ENCODE measurements at regions of chr1 and their contacts with region 1.

Region 1: DNA sequence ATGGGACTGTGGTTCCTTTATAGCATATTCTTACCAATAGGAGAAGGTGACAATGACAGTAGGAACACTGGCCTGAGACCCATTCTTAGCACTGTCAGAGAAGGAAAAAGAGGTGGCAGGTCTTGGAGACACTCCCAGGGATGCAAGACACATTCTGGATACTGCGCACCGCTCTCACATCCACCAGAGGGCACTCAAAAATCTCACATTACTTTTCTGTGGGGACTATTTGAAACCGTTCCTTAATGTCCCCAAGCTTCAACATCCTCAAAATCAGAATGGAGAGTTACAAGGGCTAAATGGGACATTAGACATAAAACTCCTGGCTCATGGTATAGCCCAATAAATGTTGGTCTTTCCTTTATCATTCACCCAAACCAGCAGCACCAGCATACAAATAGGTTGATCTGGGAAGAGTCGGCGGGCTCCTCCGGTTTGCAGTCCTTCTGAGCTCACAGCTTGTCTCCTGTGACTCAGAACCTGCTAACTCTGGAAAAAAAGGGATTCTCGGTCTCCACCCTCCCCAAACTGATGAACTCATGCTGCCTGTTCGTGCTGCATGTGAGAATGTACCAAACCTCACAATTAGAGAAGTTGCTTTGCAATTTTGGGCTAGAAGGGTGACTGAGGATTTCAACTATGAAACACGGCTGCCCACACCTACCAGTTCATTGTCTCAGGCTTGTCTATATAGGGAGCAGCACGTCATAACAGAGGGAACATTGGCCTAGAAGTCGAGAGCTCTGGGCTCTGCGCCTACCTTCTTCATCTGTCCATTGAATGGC is 40.2 kb downstream of the IL12RB2 start:
- DNase-seq: no peak
- H3K4me3 ChIP-seq: no peak overlapping the region
- H3K27ac ChIP-seq: no peak overlapping the region
- H3K27me3 ChIP-seq: no peaks in the 10 kb centered on the region
- CTCF ChIP-seq: peak; percentile 90

Region 2: DNA sequence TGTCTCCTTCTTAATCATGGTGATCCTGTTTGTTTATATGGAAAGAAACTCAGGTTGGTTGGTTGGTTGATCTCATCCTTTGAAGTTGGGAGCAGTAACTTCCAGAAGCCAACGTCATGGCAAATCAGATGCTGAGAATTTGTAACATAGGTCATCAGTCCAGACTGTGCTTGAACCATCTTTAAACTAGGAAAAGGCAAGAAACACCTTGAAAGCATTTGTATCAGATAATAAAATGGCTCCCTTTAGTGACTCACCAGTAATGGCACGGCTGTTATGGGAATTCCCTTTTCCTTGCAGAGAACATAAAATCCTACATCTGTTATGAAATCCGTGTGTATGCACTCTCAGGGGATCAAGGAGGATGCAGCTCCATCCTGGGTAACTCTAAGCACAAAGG is 24.3 kb after region 1 on chr1:
- CTCF ChIA-PET with region 1: interaction called, 10 read pairs
- POLR2A ChIA-PET with region 1: no interaction called
- DNase-seq: no peak
- H3K4me3 ChIP-seq: no peak overlapping the region
- H3K27ac ChIP-seq: no peak overlapping the region
- H3K27me3 ChIP-seq: no peaks in the 10 kb centered on the region
- CTCF ChIP-seq: no peak

Region 3: DNA sequence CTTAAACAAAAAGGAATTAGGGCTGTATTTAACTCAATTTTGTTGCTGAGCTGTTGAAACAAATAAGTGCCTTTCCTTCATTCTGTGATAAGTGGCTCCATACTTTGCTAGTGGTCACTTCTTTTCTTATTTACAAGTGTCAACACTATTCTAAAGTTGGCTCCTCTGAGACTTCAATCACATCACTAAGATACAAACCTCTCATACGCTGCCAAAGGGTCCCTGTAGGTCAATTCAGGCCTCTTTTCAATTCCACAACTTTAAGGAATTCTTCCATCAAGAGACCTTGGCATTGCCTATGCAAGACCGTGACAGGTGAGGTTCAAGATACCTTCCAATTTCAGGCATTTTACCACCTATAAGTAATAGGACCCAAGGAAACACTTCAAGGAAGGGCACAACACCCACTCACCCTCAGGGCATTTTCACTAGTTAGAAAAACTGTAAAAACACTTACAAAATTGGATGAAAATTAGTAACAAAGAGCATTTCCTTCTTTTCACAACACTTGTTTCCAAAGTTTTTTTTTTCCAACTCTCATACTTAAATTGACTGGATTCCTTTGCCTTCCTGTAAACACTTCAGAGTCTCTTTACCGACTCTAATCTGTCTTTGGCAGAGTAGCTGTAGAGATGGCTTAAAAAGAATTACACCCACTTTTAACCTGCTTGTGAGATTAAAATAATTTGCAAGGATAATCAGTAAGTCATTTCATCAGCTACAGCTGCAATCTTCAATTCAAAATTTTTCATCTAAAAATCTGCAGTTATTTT is 57.8 kb after region 1 on chr1:
- CTCF ChIA-PET with region 1: no interaction called
- POLR2A ChIA-PET with region 1: no interaction called
- DNase-seq: no peak
- H3K4me3 ChIP-seq: no peak overlapping the region
- H3K27ac ChIP-seq: no peak overlapping the region
- H3K27me3 ChIP-seq: no peaks in the 10 kb centered on the region
- CTCF ChIP-seq: no peak

Region 4: GRCh38 chr1:67418839-67419586 is 71.1 kb after region 1 on chr1:
- CTCF ChIA-PET with region 1: no interaction called
- POLR2A ChIA-PET with region 1: no interaction called
- DNase-seq: no peak
- H3K4me3 ChIP-seq: no peak overlapping the region
- H3K27ac ChIP-seq: no peak overlapping the region
- H3K27me3 ChIP-seq: no peaks in the 10 kb centered on the region
- CTCF ChIP-seq: no peak

Region 5: DNA sequence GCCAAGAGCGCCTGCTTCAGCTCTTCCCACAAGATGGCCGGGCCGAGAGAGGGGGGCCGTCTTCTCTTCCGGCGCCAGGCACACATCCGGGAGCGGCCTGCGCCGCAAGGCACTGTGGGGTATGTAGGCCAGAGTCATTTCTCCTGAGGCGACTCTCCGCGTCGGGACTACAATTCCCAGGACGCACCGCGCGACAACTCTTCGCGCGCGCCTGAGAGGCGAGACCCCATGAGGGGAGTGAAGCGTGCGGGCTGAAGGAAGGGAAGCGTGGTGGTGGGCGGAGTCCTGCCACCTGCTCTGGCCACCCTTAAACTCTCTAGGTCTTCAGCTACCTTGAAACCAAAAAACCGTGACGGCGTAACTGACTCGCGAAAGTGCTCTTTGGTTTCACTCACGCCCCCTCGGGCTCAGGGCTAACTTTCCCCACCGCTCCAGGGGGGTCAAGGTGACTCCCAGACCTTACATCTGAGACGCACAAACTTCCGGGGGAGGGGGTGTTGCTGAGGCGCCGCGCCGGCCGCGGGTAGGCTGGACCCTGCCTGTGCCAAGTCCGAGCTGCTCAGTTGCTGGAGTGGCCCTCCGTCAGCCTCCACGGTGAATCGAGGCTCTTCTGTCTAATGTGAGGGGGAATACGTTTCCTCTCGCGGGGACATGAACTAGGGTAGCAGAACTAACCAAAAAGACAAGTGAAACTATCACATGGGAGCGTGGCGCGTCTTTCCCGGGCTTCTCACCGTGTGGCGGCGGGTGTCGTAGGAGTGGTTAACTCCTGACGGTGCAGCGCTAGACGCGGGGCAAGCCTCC is 82.7 kb after region 1 on chr1 and contains the start of gene SERBP1:
- CTCF ChIA-PET with region 1: interaction called, 14 read pairs
- POLR2A ChIA-PET with region 1: no interaction called
- DNase-seq: peak; percentile 91
- H3K4me3 ChIP-seq: peak within 1 kb of the TSS; percentile 85
- H3K27ac ChIP-seq: peak within 1 kb of the TSS; percentile 48
- H3K27me3 ChIP-seq: no peaks in the 10 kb centered on the region
- CTCF ChIP-seq: no peak
- polyA plus RNA-seq, gene SERBP1: 180 and 273 TPM in 2 replicates

Region 6: DNA sequence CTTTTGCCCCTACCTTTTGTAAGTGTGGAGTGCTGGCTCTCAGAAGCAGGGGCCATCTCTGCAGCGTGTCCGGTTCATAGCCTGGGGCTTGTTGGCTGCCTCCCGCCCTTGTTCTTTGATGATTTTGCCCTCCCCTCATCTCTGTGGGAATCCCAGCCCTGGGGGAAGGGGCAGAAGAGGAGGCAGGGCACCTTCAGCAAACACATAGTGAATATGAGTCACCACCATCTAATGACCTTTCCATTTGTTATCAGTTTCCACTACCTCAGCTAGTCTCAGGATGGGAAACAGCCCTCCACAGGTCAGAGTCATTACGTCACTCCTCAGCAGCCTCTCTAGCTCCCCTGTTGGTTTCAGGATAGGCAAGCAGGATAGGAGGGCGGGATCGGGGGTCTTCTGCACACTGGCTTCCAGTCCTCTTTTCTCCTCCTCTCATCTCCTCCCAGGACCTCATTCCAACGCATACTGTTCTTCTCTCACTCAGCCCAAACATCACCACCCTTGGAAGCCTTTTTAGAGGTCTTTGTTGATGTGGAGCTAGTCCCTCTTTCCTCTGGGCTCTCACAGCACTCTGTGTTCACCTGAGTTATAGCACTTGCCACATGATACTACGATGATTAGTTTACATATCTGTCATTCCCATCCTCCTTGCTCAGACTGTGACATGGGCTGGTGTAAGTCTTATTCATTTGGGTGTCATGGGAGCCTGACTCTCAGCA is 353.0 kb after region 1 on chr1:
- CTCF ChIA-PET with region 1: no interaction called
- POLR2A ChIA-PET with region 1: no interaction called
- DNase-seq: no peak
- H3K4me3 ChIP-seq: no peak overlapping the region
- H3K27ac ChIP-seq: peak overlapping the region; percentile 32
- H3K27me3 ChIP-seq: no peaks in the 10 kb centered on the region
- CTCF ChIP-seq: peak; percentile 37

Measured in AG04450 (cell line).